Spleen (tissue), 13 donors: ENCODE measurements at regions of chr14 and their contacts with region 1.

Region 1: GRCh38 chr14:32202998-32203882 is at the start of gene RNU6-8:
- DNase-seq: peak; percentile 97
- H3K4me3 ChIP-seq: peak within 1 kb of the TSS; percentile 60 to 80 (median 69)
- H3K27ac ChIP-seq: peak within 1 kb of the TSS; percentile 87 to 97 (median 92)
- H3K4me1 ChIP-seq: peaks cover 5 to 49% (median 27%) of the 10 kb centered on the region in 6 donors
- H3K27me3 ChIP-seq: peaks cover 0 to 8% (median 0%) of the 10 kb centered on the region in 7 donors
- CTCF ChIP-seq: peak in 1 of 11 experiments; percentile 18
- POLR2A ChIP-seq: peak in 2 of 3 donors; percentile 23 to 50
- total RNA-seq, gene RNU6-8: not detected

Region 2: GRCh38 chr14:32076278-32077080 is 126.8 kb before region 1 on chr14:
- intact Hi-C with region 1: loop called (anchors 5 kb)
- DNase-seq: peak; percentile 97
- H3K4me3 ChIP-seq: peak overlapping the region; percentile 68 to 94 (median 88)
- H3K27ac ChIP-seq: peak overlapping the region; percentile 93 to 97 (median 94)
- H3K4me1 ChIP-seq: peaks cover 1 to 68% (median 39%) of the 10 kb centered on the region in 6 donors
- H3K27me3 ChIP-seq: no peaks in the 10 kb centered on the region
- CTCF ChIP-seq: no peak
- POLR2A ChIP-seq: peak in 2 of 3 donors; percentile 3 to 50